ENCODE measurements at regions of chr3 and their contacts with region 1.

Region 1: DNA sequence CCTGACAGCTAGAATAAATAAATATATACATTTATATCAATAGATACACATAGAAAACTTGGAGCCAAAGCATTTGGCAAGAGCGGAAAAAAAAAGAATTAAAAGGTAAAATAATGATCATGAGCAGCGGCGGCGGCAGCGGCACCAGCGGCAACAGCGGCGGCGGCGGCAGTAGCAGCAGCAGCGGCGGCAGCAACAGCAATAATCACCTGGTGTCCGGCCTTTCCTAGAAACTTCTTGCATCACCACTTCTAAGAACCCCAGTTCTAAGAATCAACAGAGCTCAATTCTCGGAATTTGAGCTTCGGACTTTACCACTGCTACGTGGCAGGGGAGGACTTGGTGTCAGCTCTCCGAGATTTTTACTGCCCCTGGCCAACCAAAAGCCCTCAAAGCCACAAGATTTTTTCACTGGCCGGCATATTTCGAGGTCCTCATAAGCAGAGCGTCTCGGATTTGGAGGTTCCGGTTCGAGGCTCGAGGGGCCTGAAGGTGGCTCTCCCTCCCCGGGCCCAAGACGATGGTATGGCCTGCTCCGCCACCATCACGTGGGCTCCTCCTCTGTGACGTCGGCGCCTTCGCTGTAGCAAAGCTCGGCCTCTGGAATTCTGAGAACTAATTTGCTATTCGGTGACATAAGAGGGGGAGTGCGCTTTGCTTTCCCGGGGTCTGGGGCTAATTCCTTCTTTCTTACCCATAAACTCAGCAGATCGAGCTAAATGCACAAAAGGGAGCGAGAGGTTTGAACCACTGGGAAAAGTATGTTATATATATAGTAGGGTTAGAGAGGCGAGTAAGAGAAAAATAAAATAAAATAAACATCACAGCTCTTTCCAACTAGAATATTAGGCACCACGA is at the start of gene BCL6:
- DNase-seq: peak; percentile 93
- H3K4me3 ChIP-seq: peak within 1 kb of the TSS; percentile 53 to 75 (median 67)
- H3K27ac ChIP-seq: peak within 1 kb of the TSS; percentile 91 to 99 (median 98)
- H3K4me1 ChIP-seq: peaks cover 5 to 57% (median 41%) of the 10 kb centered on the region in 4 donors
- H3K27me3 ChIP-seq: no peaks in the 10 kb centered on the region
- CTCF ChIP-seq: no peak
- EP300 ChIP-seq: peak; percentile 96
- POLR2A ChIP-seq: peak; percentile 97
- total RNA-seq, gene BCL6: 18.7 to 65.5 (median 32.5) TPM

Region 2: DNA sequence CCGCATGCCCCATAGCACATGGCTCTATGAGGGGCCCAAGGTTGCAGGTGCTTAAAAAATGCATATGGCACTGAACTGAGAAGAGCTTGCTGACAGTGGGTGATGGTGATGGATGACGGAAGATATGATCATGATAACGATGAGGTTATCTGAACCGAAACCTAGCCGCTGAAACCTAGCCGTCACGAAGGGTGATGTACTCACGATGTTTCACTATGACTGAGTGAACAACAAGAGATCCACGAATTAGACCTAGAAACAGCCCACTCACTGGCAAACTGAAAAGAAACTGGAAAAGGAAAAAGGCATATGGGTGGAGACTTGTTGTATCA is 57.5 kb after region 1 on chr3:
- in situ Hi-C with region 1: no loop called
- intact Hi-C with region 1: no loop called
- DNase-seq: no peak
- H3K4me3 ChIP-seq: no peak overlapping the region
- H3K27ac ChIP-seq: no peak overlapping the region
- H3K4me1 ChIP-seq: peaks cover 0 to 13% (median 5%) of the 10 kb centered on the region in 4 donors
- H3K27me3 ChIP-seq: no peaks in the 10 kb centered on the region
- CTCF ChIP-seq: no peak
- EP300 ChIP-seq: no peak
- POLR2A ChIP-seq: no peak

Region 3: GRCh38 chr3:188037216-188037718 is 291.8 kb after region 1 on chr3:
- in situ Hi-C with region 1: loop called in 1 of 4 experiments (anchors 25 kb)
- intact Hi-C with region 1: no loop called
- DNase-seq: peak; percentile 46
- H3K4me3 ChIP-seq: no peak overlapping the region
- H3K27ac ChIP-seq: peak overlapping the region in 2 of 4 donors; percentile 1 to 26
- H3K4me1 ChIP-seq: peaks cover 0 to 16% (median 14%) of the 10 kb centered on the region in 4 donors
- H3K27me3 ChIP-seq: no peaks in the 10 kb centered on the region
- CTCF ChIP-seq: peak; percentile 41 to 71 (median 50)
- EP300 ChIP-seq: no peak
- POLR2A ChIP-seq: no peak

Region 4: GRCh38 chr3:188154014-188154808 is 408.8 kb after region 1 on chr3 and contains the start of gene LPP:
- in situ Hi-C with region 1: loop called in 2 of 4 experiments (anchors 10 to 25 kb)
- intact Hi-C with region 1: loop called (anchors 5 kb)
- DNase-seq: peak; percentile 85
- H3K4me3 ChIP-seq: peak within 1 kb of the TSS; percentile 61 to 87 (median 78)
- H3K27ac ChIP-seq: peak within 1 kb of the TSS; percentile 96 to 98 (median 97)
- H3K4me1 ChIP-seq: peaks cover 44 to 63% (median 57%) of the 10 kb centered on the region in 4 donors
- H3K27me3 ChIP-seq: no peaks in the 10 kb centered on the region
- CTCF ChIP-seq: peak in 1 of 5 experiments; percentile 15
- EP300 ChIP-seq: no peak
- POLR2A ChIP-seq: peak; percentile 68
- total RNA-seq, gene LPP: 207 to 592 (median 406) TPM

Region 5: GRCh38 chr3:188326111-188326510 is 580.7 kb after region 1 on chr3:
- in situ Hi-C with region 1: no loop called
- intact Hi-C with region 1: no loop called
- DNase-seq: no peak
- H3K4me3 ChIP-seq: no peak overlapping the region
- H3K27ac ChIP-seq: peak overlapping the region in 3 of 4 donors; percentile 41 to 56 (median 45)
- H3K4me1 ChIP-seq: peaks cover 3 to 57% (median 12%) of the 10 kb centered on the region in 4 donors
- H3K27me3 ChIP-seq: no peaks in the 10 kb centered on the region
- CTCF ChIP-seq: no peak
- EP300 ChIP-seq: no peak
- POLR2A ChIP-seq: no peak

Region 6: GRCh38 chr3:188383748-188384147 is 638.3 kb after region 1 on chr3:
- in situ Hi-C with region 1: no loop called
- intact Hi-C with region 1: no loop called
- DNase-seq: no peak
- H3K4me3 ChIP-seq: no peak overlapping the region
- H3K27ac ChIP-seq: no peak overlapping the region
- H3K4me1 ChIP-seq: peaks cover 2 to 50% (median 23%) of the 10 kb centered on the region in 4 donors
- H3K27me3 ChIP-seq: no peaks in the 10 kb centered on the region
- CTCF ChIP-seq: no peak
- EP300 ChIP-seq: no peak
- POLR2A ChIP-seq: no peak

Region 7: DNA sequence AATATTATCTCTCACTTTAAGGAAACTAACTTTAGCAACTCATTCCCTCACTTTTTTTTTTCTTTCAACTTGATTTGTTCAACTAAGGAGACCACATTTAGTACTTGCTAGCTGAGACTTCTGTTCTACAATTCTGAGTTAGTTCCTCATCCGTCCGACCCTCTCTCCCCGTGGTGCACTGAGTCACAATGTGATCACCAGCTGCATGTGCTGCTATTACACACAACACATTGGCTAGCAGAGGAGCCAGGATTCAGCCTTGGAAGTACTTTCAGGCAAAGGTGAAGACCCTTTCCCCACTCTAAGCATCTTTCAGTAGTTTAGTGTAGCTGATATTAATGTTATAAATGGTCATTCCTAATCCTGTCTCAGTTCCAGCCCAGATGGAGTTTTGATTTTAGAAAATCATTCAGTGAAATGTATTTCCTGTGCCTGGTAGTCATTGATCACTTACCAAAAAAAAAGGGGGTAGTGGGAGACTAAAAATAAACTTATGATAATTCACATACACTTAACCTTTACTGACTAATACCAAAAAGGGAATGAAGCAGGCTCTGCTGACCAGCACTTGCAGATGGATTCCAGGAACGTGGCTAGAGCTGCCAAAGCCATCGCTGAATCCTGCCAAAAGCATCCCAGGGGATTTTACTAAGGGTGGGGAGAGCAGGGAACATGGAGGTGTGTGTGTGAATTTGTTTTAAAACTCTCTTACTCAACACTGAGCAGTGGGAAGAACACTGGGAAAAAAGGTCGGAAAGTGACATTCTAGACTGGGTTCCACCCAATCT is 833.3 kb after region 1 on chr3:
- in situ Hi-C with region 1: loop called in 1 of 4 experiments (anchors 25 kb)
- intact Hi-C with region 1: no loop called
- DNase-seq: peak; percentile 25
- H3K4me3 ChIP-seq: no peak overlapping the region
- H3K27ac ChIP-seq: peak overlapping the region; percentile 61 to 78 (median 70)
- H3K4me1 ChIP-seq: peaks cover 1 to 37% (median 28%) of the 10 kb centered on the region in 4 donors
- H3K27me3 ChIP-seq: no peaks in the 10 kb centered on the region
- CTCF ChIP-seq: no peak
- EP300 ChIP-seq: no peak
- POLR2A ChIP-seq: no peak

Region 8: DNA sequence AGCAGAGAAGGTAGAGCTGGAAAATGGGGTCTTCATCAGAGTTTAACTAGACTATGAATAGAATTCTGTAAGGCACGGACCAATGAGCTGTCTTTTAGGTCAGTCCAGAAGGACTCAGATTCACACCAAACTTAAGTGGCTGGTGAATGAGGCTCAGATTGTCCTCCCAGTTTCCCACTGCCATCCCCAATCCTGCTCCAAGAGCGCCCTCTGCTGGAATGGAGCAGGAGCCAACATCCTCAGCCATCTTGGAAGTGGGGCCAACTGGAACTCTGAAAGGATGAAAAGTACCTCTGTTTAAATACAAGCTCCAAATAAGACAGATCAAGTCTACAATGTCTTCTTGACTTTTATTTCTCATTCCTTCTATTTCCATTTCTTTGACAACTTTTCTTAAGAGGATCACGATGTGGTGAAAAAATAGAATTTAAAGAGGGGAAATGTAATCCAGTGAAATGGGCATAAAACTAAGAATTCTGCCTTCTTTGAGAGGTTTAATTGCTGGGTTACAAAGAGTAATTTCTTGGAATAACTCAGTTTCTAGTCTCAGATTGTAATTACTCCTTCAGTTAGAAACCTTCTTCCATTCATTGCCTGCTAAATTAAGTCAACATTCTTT is 1209.3 kb after region 1 on chr3:
- in situ Hi-C with region 1: loop called in 2 of 4 experiments (anchors 5 to 10 kb)
- intact Hi-C with region 1: loop called (anchors 2 kb)
- DNase-seq: peak; percentile 87
- H3K4me3 ChIP-seq: no peak overlapping the region
- H3K27ac ChIP-seq: peak overlapping the region in 1 of 4 donors; percentile 13
- H3K4me1 ChIP-seq: peaks cover 2 to 22% (median 18%) of the 10 kb centered on the region in 4 donors
- H3K27me3 ChIP-seq: no peaks in the 10 kb centered on the region
- CTCF ChIP-seq: peak; percentile 88 to 96 (median 93)
- EP300 ChIP-seq: no peak
- POLR2A ChIP-seq: no peak

Measured in transverse colon (tissue), 4 donors.